Naive thymus-derived CD4-positive, alpha-beta T cell (primary cell): ENCODE measurements at regions of chr9 and their contacts with region 1.

Region 1: DNA sequence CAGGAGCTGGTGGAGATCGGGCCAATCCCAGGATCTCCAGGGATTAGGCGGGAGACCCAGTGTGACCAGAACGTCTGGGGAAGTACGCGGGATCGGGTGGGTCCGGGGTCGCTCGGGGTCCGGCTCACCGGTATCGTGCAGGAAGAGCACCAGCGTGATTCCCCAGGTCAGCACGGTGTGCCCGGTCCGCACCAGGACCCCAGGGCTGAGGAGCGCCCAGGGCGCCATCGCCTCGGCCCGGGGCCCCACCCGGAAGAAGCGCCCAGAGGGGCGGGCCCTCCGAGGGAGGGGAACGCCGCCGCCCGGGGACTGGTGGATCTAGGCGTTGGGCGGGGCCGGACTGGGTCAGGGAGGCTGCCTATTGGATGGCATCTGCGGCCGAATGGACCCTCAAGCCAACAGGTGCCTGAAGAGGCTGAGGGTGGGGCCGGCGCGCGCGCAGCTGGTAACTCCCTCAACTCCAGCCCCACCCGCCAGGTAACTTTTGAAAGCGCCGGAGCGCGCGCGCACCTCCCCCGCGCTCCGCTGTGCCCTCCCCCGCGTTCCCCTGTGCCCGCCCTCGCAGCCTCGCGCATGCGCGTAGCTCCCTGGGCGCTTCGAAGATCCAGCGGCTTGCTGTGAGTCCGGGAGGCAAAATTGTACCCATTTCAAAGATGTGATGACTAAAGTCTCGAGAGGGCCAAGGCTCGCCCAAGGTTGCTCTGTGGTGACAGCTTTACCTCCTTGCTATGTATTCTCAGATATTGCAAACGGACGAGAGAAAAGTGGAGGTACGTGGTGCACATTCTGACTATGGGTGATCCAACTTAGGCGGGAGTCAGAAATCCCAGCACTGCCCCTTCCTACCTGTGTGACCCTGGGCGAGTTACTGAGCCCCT is at the start of gene ZDHHC12:
- DNase-seq: peak; percentile 96 to 99 (median 99)
- ATAC-seq: peak; percentile 97
- H3K4me3 ChIP-seq: peak within 1 kb of the TSS; percentile 97
- H3K4me3 Mint-ChIP-seq: peak within 1 kb of the TSS; percentile 85 to 97 (median 94)
- H3K27ac ChIP-seq: peak within 1 kb of the TSS; percentile 89
- H3K27ac Mint-ChIP-seq: peak within 1 kb of the TSS; percentile 85 to 96 (median 94)
- H3K4me1 ChIP-seq: peaks cover 13 to 29% of the 10 kb centered on the region in 2 donors
- H3K4me1 Mint-ChIP-seq: peaks cover 23 to 46% (median 39%) of the 10 kb centered on the region in 7 donors
- H3K27me3 ChIP-seq: no peaks in the 10 kb centered on the region
- H3K27me3 Mint-ChIP-seq: no peaks in the 10 kb centered on the region
- total RNA-seq, gene ZDHHC12: 21.2 to 70.3 (median 25.7) TPM

Region 2: DNA sequence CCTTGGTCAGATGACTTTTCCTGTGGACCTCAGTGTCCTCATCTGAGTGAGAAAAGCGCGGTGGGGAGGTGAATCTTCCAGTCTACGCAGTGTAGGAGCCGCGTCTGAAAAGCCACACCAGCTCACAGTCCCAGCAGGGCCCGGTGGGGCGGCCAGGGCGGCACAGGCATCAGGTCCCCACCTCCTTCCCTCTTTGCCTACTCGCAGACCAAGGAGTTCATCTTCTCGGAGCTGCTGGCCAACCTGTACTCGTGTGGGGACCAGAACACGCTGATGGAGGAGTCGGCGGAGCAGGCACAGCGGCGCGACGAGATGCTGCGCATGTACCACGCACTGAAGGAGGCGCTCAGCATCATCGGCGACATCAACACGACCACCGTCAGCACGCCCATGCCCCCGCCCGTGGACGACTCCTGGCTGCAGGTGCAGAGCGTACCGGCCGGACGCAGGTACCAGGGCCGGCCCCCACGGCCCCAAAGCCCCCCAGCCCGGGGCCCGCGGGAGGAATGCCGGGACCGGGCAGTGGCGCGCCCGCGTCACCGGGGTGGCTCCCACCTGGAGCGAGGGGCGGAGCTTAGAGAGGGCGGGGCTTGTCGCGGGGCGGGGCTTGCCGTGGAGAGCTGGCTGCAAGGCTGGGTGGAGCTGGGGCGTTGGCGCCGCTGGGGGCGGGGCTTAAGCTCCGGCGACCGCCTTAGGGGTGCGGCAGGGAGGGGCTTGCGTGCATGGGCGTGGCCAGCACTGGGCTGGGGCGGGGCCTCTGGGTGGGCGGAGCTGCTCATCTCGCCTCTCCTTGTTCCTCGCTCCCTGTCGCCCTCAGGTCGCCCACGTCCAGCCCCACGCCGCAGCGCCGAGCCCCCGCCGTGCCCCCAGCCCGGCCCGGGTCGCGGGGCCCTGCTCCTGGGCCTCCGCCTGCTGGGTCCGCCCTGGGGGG is 473.9 kb before region 1 on chr9:
- CTCF ChIA-PET with region 1: no interaction called
- POLR2A ChIA-PET with region 1: no interaction called
- intact Hi-C with region 1: loop called in 1 of 2 experiments (anchors 1 kb)
- DNase-seq: peak; percentile 96 to 100 (median 98)
- ATAC-seq: peak; percentile 98
- H3K4me3 ChIP-seq: peak overlapping the region; percentile 83
- H3K4me3 Mint-ChIP-seq: peak overlapping the region; percentile 79 to 93 (median 88)
- H3K27ac ChIP-seq: peak overlapping the region; percentile 72
- H3K27ac Mint-ChIP-seq: peak overlapping the region; percentile 60 to 97 (median 95)
- H3K4me1 ChIP-seq: peaks cover 7 to 9% of the 10 kb centered on the region in 2 donors
- H3K4me1 Mint-ChIP-seq: peaks cover 7 to 28% (median 17%) of the 10 kb centered on the region in 7 donors
- H3K27me3 ChIP-seq: no peaks in the 10 kb centered on the region
- H3K27me3 Mint-ChIP-seq: peaks cover 0 to 39% (median 6%) of the 10 kb centered on the region in 5 donors

Region 3: DNA sequence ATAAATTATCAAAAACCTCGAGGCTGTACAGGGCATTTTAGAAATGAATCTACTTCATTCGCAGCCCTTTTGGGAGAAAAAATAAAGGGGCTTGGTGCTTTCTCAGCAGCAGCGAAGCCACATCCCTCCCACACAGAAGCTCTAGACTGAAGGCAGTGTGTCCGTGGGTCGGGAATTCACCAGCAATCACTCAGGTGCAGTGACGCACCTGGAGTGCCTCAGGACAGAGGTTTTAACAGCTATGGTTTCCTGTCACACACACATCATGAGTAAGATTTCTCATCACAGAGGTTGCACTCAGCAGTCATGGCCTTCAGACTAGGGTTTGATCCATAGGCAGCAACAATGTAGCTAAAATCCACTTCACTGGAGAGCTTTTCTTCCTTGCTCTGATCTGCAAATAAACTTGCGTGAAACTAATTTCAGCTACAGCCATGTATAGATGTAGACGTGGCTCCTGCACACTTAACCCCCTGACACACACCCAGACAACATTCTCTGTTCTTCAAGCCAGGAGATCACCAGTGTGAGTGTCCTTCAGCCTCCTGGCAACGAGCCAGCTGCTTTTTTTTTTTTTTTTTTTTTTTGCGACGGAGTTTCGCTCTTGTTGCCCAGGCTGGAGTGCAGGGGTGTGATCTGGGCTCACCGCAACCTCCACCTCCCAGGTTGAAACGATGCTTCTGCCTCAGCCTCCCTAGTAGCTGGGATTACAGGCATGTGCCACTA is 102.2 kb before region 1 on chr9:
- CTCF ChIA-PET with region 1: no interaction called
- POLR2A ChIA-PET with region 1: no interaction called
- intact Hi-C with region 1: no loop called
- DNase-seq: no peak
- ATAC-seq: no peak
- H3K4me3 ChIP-seq: no peak overlapping the region
- H3K4me3 Mint-ChIP-seq: no peak overlapping the region
- H3K27ac ChIP-seq: no peak overlapping the region
- H3K27ac Mint-ChIP-seq: no peak overlapping the region
- H3K4me1 ChIP-seq: no peaks in the 10 kb centered on the region
- H3K4me1 Mint-ChIP-seq: peaks cover 0 to 2% (median 0%) of the 10 kb centered on the region in 7 donors
- H3K27me3 ChIP-seq: no peaks in the 10 kb centered on the region
- H3K27me3 Mint-ChIP-seq: no peaks in the 10 kb centered on the region

Region 4: DNA sequence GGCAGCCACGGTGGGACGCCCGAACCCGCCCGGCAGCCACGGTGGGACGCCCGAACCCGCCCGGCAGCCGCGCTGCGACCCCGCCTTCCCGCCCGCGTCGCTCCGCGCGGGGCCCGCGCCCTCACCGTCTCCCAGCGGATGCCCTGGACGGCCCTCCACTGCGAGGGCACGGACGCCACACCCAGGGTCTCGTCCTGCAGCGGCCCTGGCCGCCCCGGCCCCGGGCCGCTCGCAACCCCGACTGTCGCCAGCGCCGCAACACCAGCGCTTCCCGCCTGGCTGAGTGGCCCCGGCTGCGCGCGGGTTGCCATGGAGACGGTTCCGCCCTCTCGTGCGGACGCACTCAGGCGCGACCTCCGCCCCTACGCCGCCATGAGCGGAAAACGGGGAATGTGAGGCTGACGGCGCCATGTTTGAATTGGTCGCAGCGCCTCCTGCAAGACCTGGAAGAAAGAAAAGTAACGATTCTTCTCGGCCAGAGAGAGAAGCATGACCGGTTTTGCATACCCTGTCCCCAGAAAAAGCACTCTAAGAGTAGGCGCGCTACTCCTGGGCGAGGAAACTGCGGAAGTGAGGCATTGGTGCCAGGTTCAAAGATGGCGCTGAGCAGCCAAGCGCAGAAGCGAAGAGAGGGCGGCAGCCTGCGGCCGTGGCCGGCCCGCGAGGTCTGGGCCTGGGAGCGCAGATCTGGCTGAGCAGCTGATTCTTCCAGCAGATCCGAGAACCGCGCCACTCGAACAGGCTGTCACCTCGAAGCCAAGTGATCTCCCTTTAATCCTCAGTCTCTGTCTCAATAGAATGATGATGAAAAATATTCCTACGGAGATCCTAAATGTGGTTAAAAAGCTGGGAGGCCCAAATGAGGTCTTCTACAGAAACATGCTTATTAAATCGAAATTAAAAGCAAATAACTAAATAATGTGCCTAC is 67.4 kb before region 1 on chr9 and contains the start of gene DYNC2I2:
- CTCF ChIA-PET with region 1: no interaction called
- POLR2A ChIA-PET with region 1: interaction called, 3 read pairs
- intact Hi-C with region 1: loop called in 1 of 2 experiments (anchors 1 kb)
- DNase-seq: peak; percentile 91 to 96 (median 96)
- ATAC-seq: peak; percentile 98
- H3K4me3 ChIP-seq: peak within 1 kb of the TSS; percentile 96
- H3K4me3 Mint-ChIP-seq: peak within 1 kb of the TSS; percentile 88 to 98 (median 94)
- H3K27ac ChIP-seq: peak within 1 kb of the TSS; percentile 99
- H3K27ac Mint-ChIP-seq: peak within 1 kb of the TSS; percentile 95 to 100 (median 99)
- H3K4me1 ChIP-seq: peaks cover 3 to 9% of the 10 kb centered on the region in 2 donors
- H3K4me1 Mint-ChIP-seq: peaks cover 0 to 14% (median 7%) of the 10 kb centered on the region in 7 donors
- H3K27me3 ChIP-seq: no peaks in the 10 kb centered on the region
- H3K27me3 Mint-ChIP-seq: no peaks in the 10 kb centered on the region
- total RNA-seq, gene DYNC2I2: 2.5 to 41.7 (median 3.8) TPM

Region 5: GRCh38 chr9:128702445-128702948 is 21.6 kb before region 1 on chr9 and contains the start of gene PKN3:
- CTCF ChIA-PET with region 1: no interaction called
- POLR2A ChIA-PET with region 1: interaction called, 4 read pairs
- intact Hi-C with region 1: loop called (anchors 1 kb)
- DNase-seq: peak; percentile 63 to 95 (median 82)
- ATAC-seq: peak; percentile 94
- H3K4me3 ChIP-seq: peak within 1 kb of the TSS; percentile 68
- H3K4me3 Mint-ChIP-seq: peak within 1 kb of the TSS; percentile 84 to 94 (median 91)
- H3K27ac ChIP-seq: peak within 1 kb of the TSS; percentile 60
- H3K27ac Mint-ChIP-seq: peak within 1 kb of the TSS; percentile 52 to 91 (median 79)
- H3K4me1 ChIP-seq: no peaks in the 10 kb centered on the region
- H3K4me1 Mint-ChIP-seq: peaks cover 4 to 17% (median 10%) of the 10 kb centered on the region in 7 donors
- H3K27me3 ChIP-seq: no peaks in the 10 kb centered on the region
- H3K27me3 Mint-ChIP-seq: no peaks in the 10 kb centered on the region
- total RNA-seq, gene PKN3: 1.1 to 11.7 (median 1.6) TPM

Region 6: GRCh38 chr9:129036241-129036922 is 312.3 kb after region 1 on chr9 and contains the start of gene MIGA2:
- CTCF ChIA-PET with region 1: no interaction called
- POLR2A ChIA-PET with region 1: no interaction called
- intact Hi-C with region 1: loop called in 1 of 2 experiments (anchors 1 kb)
- DNase-seq: peak; percentile 78 to 93 (median 90)
- ATAC-seq: peak; percentile 99
- H3K4me3 ChIP-seq: peak within 1 kb of the TSS; percentile 87
- H3K4me3 Mint-ChIP-seq: peak within 1 kb of the TSS; percentile 90 to 99 (median 94)
- H3K27ac ChIP-seq: peak within 1 kb of the TSS; percentile 72
- H3K27ac Mint-ChIP-seq: peak within 1 kb of the TSS; percentile 56 to 93 (median 87)
- H3K4me1 ChIP-seq: peaks cover 13 to 17% of the 10 kb centered on the region in 2 donors
- H3K4me1 Mint-ChIP-seq: peaks cover 22 to 41% (median 37%) of the 10 kb centered on the region in 7 donors
- H3K27me3 ChIP-seq: no peaks in the 10 kb centered on the region
- H3K27me3 Mint-ChIP-seq: no peaks in the 10 kb centered on the region
- total RNA-seq, gene MIGA2: 50.0 to 73.4 (median 60.7) TPM